ENCODE measurements at regions of chr16 and their contacts with region 1.

Region 1: DNA sequence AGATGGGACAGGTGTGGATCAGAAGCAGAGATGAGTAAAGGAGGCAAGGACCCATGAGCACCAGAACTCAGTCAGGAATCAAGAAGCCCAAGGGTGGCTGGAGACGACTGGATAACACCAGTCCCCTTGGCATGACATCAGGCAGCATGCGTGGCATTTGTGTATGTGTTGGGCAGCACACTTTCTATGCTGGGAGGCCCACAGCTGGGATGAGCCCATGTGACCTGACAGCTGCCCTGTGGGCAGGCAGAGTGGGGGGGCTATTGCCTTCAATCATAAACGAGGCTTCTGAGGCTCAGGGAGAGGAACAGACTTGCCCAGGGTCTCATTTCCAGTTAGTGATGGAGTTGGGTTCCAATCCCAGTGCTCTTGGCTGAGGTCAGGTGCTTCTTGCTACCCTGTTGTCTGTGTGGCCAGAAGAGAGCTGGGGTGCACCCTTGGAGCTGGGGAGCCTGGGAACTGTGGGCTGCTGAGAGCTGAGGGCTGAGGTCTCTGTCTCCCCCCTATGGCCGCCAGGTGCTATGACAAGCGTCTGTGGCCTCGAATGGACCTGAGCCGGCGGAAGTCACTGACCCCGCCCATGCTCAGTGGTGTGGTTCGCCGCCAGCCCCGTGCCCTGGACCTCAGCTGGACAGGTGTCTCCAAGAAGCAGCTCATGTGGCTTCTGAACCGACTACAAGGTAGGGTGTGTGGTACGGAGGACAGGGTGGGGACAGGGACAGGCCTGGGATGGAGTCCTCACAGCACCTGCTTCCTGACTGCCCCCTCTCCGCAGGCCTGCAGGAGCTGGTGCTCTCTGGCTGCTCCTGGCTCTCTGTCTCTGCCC is 7.1 kb upstream of the ORAI3 start:
- DNase-seq: peak; percentile 81
- H3K4me3 Mint-ChIP-seq: peak overlapping the region; percentile 64
- H3K27ac Mint-ChIP-seq: peak overlapping the region; percentile 68
- H3K4me1 Mint-ChIP-seq: peaks cover 38% of the 10 kb centered on the region
- H3K27me3 Mint-ChIP-seq: no peaks in the 10 kb centered on the region

Region 2: DNA sequence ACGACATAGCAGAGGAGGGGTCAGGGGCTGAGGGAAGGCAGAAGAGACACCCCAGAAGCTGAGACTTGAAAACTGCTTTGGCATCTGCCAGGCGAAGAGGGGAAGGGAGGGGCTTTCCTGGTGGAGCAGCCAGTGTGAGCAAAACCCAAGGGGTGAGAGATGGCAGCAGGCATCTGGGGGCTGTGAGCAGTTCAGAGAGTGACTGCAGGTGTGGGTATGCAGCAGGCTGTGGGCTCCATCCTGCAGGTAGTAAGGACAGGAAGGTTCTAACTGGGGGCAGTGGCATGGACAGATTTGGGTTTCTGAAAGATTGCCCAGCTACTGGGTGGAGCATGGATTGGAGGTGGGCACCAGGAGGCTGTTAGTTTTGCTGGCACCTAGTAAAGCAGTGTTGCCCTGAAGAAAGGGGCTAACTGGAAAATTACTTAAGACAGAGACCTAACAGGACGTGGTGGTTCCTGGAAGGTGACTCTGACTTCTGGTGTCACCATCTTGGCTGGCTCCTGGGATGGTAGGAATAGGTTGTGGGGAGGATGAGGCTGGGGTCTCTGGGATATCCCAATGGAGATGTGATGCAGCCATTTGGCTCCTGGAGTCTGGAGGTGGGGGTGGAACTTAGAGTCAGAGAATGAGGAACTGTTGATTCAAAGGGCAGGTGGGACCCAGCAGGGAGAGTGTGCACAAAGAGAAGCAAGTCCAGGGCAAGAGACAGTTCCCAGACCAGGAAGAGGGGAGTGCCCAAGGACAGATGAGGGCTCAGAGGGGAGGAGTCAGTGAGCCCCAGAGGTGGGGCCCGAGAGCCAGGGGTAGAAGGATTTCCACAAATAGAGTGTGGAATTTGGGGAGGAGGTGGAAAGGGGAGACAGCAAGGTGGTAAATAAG is 59.1 kb before region 1 on chr16:
- CTCF ChIA-PET with region 1: no interaction called
- POLR2A ChIA-PET with region 1: no interaction called
- DNase-seq: no peak
- H3K4me3 Mint-ChIP-seq: no peak overlapping the region
- H3K27ac Mint-ChIP-seq: peak overlapping the region; percentile 71
- H3K4me1 Mint-ChIP-seq: peaks cover 33% of the 10 kb centered on the region
- H3K27me3 Mint-ChIP-seq: no peaks in the 10 kb centered on the region

Region 3: DNA sequence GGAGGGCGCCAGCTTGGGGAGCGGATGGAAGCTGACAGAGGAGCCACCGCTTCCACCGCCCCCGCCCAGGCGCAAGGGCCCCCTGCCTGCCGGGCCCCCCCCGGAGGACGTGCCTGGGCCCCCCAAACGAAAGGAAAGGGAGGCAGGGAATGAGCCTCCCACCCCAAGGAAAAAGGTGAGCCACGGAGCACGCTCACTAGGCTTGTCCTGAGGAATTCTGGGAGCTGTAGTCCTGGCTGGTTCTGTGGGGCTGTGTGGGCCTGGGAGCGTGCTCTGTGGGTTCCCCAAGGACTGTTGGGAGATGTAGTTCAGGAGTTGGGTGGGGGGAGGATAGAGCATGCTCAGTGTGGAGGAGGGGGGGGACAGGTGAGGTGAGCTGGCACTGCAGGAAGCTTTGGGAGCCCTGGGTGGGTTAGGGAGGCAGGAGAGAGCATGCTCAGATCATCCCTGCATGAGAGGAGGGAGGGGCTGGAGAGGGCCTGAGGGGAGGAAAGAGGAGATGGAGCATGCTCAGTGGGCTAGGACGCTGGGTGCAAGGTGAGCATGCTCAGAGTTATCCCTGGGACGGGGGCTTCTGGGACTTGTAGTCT is 13.9 kb before region 1 on chr16:
- CTCF ChIA-PET with region 1: interaction called, 19 read pairs
- POLR2A ChIA-PET with region 1: no interaction called
- DNase-seq: no peak
- H3K4me3 Mint-ChIP-seq: no peak overlapping the region
- H3K27ac Mint-ChIP-seq: peak overlapping the region; percentile 16
- H3K4me1 Mint-ChIP-seq: peaks cover 13% of the 10 kb centered on the region
- H3K27me3 Mint-ChIP-seq: no peaks in the 10 kb centered on the region

Region 4: GRCh38 chr16:30956601-30957455 is 15.0 kb after region 1 on chr16:
- CTCF ChIA-PET with region 1: interaction called, 40 read pairs
- POLR2A ChIA-PET with region 1: interaction called, 5 read pairs
- DNase-seq: peak; percentile 87
- H3K4me3 Mint-ChIP-seq: peak overlapping the region; percentile 90
- H3K27ac Mint-ChIP-seq: peak overlapping the region; percentile 99
- H3K4me1 Mint-ChIP-seq: peaks cover 45% of the 10 kb centered on the region
- H3K27me3 Mint-ChIP-seq: no peaks in the 10 kb centered on the region

Region 5: DNA sequence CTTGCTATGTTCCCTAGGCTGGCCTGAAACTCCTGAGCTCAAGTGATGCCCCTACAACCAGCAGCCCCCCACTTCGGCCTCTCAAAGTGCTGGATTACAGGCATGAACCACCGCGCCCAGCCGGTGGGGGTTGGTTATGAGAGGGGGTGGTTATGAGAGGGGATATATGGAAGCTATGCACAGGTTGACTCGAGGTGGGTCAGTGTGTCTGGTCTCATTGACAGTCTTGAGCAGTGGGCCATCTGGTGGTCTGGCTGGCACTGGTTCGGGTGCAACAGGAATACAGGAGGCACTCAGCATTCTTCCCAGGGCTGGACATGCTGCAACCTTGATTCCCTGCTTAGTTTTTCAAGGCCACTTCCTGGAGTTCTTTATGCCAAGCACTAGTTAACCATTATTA is 74.2 kb after region 1 on chr16:
- CTCF ChIA-PET with region 1: no interaction called
- POLR2A ChIA-PET with region 1: no interaction called
- DNase-seq: no peak
- H3K4me3 Mint-ChIP-seq: no peak overlapping the region
- H3K27ac Mint-ChIP-seq: no peak overlapping the region
- H3K4me1 Mint-ChIP-seq: peaks cover 4% of the 10 kb centered on the region
- H3K27me3 Mint-ChIP-seq: peaks cover 34% of the 10 kb centered on the region

Measured in activated CD4-positive, alpha-beta memory T cell treated with anti-CD3 and anti-CD28 coated beads, Interleukin-2, amount 10 ng/mL, durations not matched to agents 7 days and 5 days (primary cell).